ENCODE measurements at regions of chr2 and their contacts with region 1.

Region 1: GRCh38 chr2:100262555-100263320 is 59.6 kb downstream of the LONRF2 start:
- DNase-seq: no peak
- H3K4me3 ChIP-seq: peak overlapping the region; percentile 18; the same call in 1 of the 2 replicates
- CTCF ChIP-seq: peak; percentile 94

Region 2: DNA sequence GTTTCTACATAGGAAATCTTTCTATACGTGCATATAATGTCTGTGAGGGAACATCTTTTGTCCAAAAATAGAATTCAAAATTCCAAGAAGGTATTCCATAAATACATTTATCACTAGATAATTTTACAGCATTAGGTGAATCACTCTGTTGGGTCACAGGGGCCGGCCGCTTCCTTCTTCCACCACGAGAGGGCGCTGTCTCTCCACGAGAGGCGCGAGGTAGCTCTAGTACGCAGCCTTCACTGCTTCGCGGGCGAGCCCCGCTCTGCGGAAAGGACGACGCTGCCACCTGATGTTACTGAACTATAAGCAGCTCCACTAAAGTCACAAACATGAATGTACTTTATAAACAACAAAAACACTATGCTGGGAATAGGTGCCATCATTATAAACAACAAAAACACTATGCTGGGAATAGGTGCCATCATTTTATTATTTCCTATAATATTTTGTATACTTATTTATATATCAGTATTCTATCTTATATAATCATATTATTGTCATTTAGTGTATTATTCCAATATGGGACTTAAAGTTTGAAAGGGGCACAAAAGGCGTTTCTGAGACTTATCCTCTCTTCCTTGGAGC is 703.6 kb before region 1 on chr2:
- CTCF ChIA-PET with region 1: interaction called, 125 read pairs
- POLR2A ChIA-PET with region 1: no interaction called
- DNase-seq: no peak
- H3K4me3 ChIP-seq: no peak overlapping the region
- CTCF ChIP-seq: peak; percentile 93

Region 3: GRCh38 chr2:100246163-100247145 is 16.3 kb before region 1 on chr2:
- CTCF ChIA-PET with region 1: interaction called, 105 read pairs
- POLR2A ChIA-PET with region 1: no interaction called
- DNase-seq: no peak
- H3K4me3 ChIP-seq: no peak overlapping the region
- CTCF ChIP-seq: peak; percentile 14

Region 4: GRCh38 chr2:100281521-100282438 is 19.0 kb after region 1 on chr2:
- CTCF ChIA-PET with region 1: interaction called, 134 read pairs
- POLR2A ChIA-PET with region 1: interaction called, 3 read pairs
- DNase-seq: no peak
- H3K4me3 ChIP-seq: no peak overlapping the region
- CTCF ChIP-seq: no peak

Region 5: GRCh38 chr2:100365434-100365833 is 102.7 kb after region 1 on chr2:
- CTCF ChIA-PET with region 1: interaction called, 24 read pairs
- POLR2A ChIA-PET with region 1: no interaction called
- DNase-seq: peak; percentile 37
- H3K4me3 ChIP-seq: no peak overlapping the region
- CTCF ChIP-seq: no peak

Region 6: GRCh38 chr2:100394111-100394641 is 131.4 kb after region 1 on chr2:
- CTCF ChIA-PET with region 1: interaction called, 120 read pairs
- POLR2A ChIA-PET with region 1: no interaction called
- DNase-seq: no peak
- H3K4me3 ChIP-seq: no peak overlapping the region
- CTCF ChIP-seq: no peak

Region 7: DNA sequence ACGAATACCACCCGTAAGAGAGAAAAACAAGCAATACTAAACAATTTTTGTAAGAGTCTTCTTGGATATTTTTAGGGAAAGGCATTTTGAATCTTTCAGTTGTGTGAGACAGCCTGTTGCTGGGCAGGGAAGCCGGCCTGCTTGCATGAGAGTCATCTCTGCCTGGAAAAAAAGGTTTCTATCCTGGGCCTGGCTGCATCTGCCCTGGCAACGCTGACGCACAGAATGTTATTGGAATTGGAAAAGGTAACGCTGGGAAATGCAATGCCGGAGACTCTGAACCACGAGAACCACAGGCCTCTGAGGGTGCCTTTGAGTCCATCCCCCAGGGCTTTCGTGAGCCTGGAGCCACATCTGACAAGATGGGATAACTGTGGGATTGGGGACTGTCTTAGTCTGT is 539.3 kb after region 1 on chr2:
- CTCF ChIA-PET with region 1: no interaction called
- POLR2A ChIA-PET with region 1: no interaction called
- DNase-seq: no peak
- H3K4me3 ChIP-seq: no peak overlapping the region
- CTCF ChIP-seq: no peak

Measured in AG04449 (cell line).